HEK293 (cell line): ENCODE measurements at regions of chr4 and their contacts with region 1.

Region 1: GRCh38 chr4:76087007-76087769 is 12.7 kb downstream of the ART3 start:
- H3K4me3 ChIP-seq: no peak overlapping the region
- H3K27ac ChIP-seq: no peak overlapping the region
- H3K4me1 ChIP-seq: no peaks in the 10 kb centered on the region
- CTCF ChIP-seq: 0 out of 2 replicates have a peak, but pooled peaks have one; percentile 36

Region 2: GRCh38 chr4:75995727-75996126 is 91.5 kb before region 1 on chr4:
- CTCF ChIA-PET with region 1: interaction called, 20 read pairs
- POLR2A ChIA-PET with region 1: no interaction called
- H3K4me3 ChIP-seq: no peak overlapping the region
- H3K27ac ChIP-seq: no peak overlapping the region
- H3K4me1 ChIP-seq: no peaks in the 10 kb centered on the region
- CTCF ChIP-seq: peak; percentile 33; the same call in 1 of the 2 replicates

Region 3: DNA sequence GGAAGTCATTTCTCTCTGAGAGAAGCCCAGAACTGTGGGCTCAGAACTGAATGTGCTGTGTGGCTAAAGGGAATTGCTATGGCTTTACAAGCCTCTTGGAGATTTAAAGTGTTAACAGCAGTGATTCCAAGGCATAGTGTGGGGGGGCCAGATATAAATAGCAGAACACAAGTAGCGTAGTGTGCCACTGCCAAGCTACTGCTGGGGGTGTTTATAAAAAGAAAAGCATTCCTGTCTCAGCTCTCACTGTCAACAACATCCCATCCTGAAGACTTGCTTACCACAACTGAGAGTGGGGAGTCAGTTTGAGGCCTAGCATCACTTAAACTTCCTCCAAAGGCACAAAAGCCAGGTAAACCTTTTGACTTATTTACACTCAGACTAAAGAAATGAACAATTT is 12.7 kb before region 1 on chr4 and contains the start of gene ART3:
- CTCF ChIA-PET with region 1: interaction called, 11 read pairs
- POLR2A ChIA-PET with region 1: no interaction called
- H3K4me3 ChIP-seq: no peak within 1 kb of the TSS
- H3K27ac ChIP-seq: no peak within 1 kb of the TSS
- H3K4me1 ChIP-seq: no peaks in the 10 kb centered on the region
- CTCF ChIP-seq: no peak